Activated B cell treated with CpG ODN at 0.5 μM for 24 hours (primary cell): ENCODE measurements at regions of chr16 and their contacts with region 1.

Region 1: GRCh38 chr16:50065624-50066481 is at the start of gene HEATR3:
- DNase-seq: peak; percentile 92
- ATAC-seq: peak; percentile 85
- H3K4me3 Mint-ChIP-seq: peak within 1 kb of the TSS; percentile 90
- H3K27ac Mint-ChIP-seq: peak within 1 kb of the TSS; percentile 90
- H3K4me1 Mint-ChIP-seq: peaks cover 31% of the 10 kb centered on the region
- H3K27me3 Mint-ChIP-seq: no peaks in the 10 kb centered on the region
- CTCF ChIP-seq: no peak
- total RNA-seq, gene HEATR3: 16.1 and 17.8 TPM in 2 replicates

Region 2: GRCh38 chr16:49855280-49855821 is 210.5 kb before region 1 on chr16:
- CTCF ChIA-PET with region 1: no interaction called
- POLR2A ChIA-PET with region 1: no interaction called
- intact Hi-C with region 1: loop called (anchors 5 kb)
- DNase-seq: peak; percentile 47
- ATAC-seq: peak; percentile 77
- H3K4me3 Mint-ChIP-seq: peak overlapping the region; percentile 69
- H3K27ac Mint-ChIP-seq: no peak overlapping the region
- H3K4me1 Mint-ChIP-seq: peaks cover 21% of the 10 kb centered on the region
- H3K27me3 Mint-ChIP-seq: peaks cover 38% of the 10 kb centered on the region
- CTCF ChIP-seq: no peak

Region 3: DNA sequence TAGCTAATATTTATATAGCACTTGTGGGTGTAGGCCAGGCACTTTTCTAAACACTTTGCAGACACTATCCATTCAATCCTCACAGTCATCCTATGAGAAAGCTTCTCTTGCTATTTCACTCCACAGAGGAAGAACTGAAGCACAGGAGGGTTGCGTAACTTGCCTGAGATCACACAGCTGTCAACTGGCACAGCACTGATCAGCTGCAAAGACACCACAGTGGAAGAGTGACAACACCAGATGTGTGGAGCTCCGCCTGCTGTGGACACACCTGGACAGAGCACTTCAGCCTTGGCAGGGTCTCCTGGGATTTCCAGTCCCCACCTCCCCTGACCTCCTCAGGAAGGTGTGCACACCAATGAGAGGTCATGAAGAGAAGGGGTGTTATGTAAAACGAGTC is 54.1 kb before region 1 on chr16:
- CTCF ChIA-PET with region 1: no interaction called
- POLR2A ChIA-PET with region 1: no interaction called
- intact Hi-C with region 1: no loop called
- DNase-seq: no peak
- ATAC-seq: no peak
- H3K4me3 Mint-ChIP-seq: no peak overlapping the region
- H3K27ac Mint-ChIP-seq: no peak overlapping the region
- H3K4me1 Mint-ChIP-seq: no peaks in the 10 kb centered on the region
- H3K27me3 Mint-ChIP-seq: peaks cover 6% of the 10 kb centered on the region
- CTCF ChIP-seq: no peak